ENCODE measurements at regions of chr4 and their contacts with region 1.

Region 1: GRCh38 chr4:186137196-186137794 is 32.8 kb downstream of the FAM149A start:
- DNase-seq: no peak
- ATAC-seq: peak; percentile 32
- H3K4me3 Mint-ChIP-seq: no peak overlapping the region
- H3K27ac Mint-ChIP-seq: no peak overlapping the region
- H3K4me1 Mint-ChIP-seq: peaks cover 8% of the 10 kb centered on the region
- H3K27me3 Mint-ChIP-seq: peaks cover 12% of the 10 kb centered on the region
- CTCF ChIP-seq: no peak

Region 2: DNA sequence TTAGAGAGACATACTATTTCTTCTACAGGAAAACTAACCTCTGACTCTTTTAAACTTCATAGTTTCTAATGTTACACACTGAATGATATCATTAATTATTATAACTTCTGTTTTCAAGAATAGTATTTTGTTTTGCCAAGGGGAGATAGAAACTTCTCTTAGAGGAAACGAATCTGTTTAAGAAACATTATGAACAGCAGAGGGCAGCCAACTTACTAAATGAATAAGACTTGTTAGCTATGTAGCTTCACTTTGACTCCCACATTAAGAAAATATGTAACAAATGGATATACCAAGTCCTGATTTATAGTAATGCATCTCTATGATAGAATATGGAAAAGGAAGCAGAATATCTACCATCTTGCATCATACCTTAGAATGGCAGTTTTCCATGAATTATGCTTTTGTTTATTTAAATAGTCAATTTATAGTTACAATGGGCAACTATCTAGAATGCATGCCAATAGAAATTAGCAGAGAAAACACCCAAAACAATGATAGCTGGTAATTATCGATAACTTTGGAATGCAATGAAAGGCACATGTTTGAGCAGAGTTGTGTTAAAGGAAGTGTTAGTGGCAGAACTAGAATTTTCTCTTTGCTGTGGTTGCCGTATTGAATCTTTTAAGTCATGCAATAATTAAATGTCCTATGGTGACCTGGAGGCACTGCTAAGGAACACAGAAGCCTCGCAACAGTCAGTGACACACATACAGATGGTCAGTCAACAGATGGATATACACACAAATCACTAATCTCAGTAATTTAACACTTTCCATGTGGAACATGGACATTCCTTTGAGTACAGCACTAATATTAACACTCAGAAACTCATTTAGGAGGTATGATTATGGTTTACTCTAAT is 496.3 kb before region 1 on chr4:
- CTCF ChIA-PET with region 1: interaction called, 16 read pairs
- POLR2A ChIA-PET with region 1: no interaction called
- intact Hi-C with region 1: loop called (anchors 1 kb)
- DNase-seq: no peak
- ATAC-seq: no peak
- H3K4me3 Mint-ChIP-seq: no peak overlapping the region
- H3K27ac Mint-ChIP-seq: no peak overlapping the region
- H3K4me1 Mint-ChIP-seq: no peaks in the 10 kb centered on the region
- H3K27me3 Mint-ChIP-seq: peaks cover 31% of the 10 kb centered on the region
- CTCF ChIP-seq: no peak

Region 3: DNA sequence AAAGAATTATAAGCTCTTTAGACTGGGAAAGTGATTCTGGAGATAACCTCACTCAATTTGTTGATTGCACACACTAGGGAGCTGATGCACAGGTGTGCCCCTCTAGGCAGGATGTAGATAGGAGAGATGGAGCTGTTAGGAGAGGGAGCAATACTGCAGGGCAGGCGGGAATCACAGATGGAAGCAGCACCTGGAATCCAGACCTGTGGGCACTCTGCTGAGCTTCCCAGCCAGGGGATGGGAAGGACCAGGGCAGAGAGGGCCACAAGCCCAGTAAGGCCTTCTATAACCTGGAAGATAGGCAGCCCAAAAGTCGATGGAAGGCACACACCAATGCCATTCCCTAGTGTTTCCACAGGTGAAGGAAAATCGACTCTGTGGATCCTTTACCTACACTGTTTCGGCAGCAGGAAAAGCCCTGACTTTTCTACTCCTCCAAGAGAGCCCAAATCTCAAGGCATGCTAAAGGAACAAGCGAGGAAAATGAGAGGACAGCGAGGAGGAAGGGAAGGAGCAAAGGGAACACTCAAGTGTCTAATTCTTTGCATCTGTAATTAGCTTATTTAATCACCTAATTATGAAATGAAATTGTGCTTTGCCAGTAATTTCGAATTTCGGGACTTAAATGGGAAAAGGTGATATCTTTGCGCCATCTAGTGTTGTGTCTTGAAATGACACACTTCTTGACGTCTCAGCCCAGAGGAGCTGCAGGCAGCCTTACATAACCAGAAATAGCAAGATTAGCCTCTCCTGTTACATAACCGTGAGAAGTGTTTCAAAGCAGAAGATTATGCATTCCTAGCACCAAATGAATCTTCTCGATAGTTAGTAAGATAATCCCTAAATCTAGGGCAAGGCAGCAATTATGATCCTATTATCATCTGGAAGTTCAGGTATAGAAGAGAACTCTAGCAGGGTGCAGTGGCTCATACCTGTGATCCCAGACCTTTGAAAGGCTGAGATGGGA is 99.3 kb before region 1 on chr4:
- CTCF ChIA-PET with region 1: interaction called, 3 read pairs
- POLR2A ChIA-PET with region 1: no interaction called
- intact Hi-C with region 1: loop called (anchors 1 kb)
- DNase-seq: no peak
- ATAC-seq: peak; percentile 60
- H3K4me3 Mint-ChIP-seq: no peak overlapping the region
- H3K27ac Mint-ChIP-seq: no peak overlapping the region
- H3K4me1 Mint-ChIP-seq: no peaks in the 10 kb centered on the region
- H3K27me3 Mint-ChIP-seq: peaks cover 28% of the 10 kb centered on the region
- CTCF ChIP-seq: peak; percentile 41

Region 4: GRCh38 chr4:186067757-186068385 is 69.4 kb before region 1 on chr4:
- CTCF ChIA-PET with region 1: interaction called, 16 read pairs
- POLR2A ChIA-PET with region 1: no interaction called
- intact Hi-C with region 1: loop called (anchors 1 kb)
- DNase-seq: no peak
- ATAC-seq: no peak
- H3K4me3 Mint-ChIP-seq: no peak overlapping the region
- H3K27ac Mint-ChIP-seq: no peak overlapping the region
- H3K4me1 Mint-ChIP-seq: peaks cover 7% of the 10 kb centered on the region
- H3K27me3 Mint-ChIP-seq: peaks cover 39% of the 10 kb centered on the region
- CTCF ChIP-seq: no peak

Region 5: GRCh38 chr4:186096681-186097165 is 40.6 kb before region 1 on chr4:
- CTCF ChIA-PET with region 1: no interaction called
- POLR2A ChIA-PET with region 1: no interaction called
- intact Hi-C with region 1: no loop called
- DNase-seq: no peak
- ATAC-seq: no peak
- H3K4me3 Mint-ChIP-seq: no peak overlapping the region
- H3K27ac Mint-ChIP-seq: no peak overlapping the region
- H3K4me1 Mint-ChIP-seq: no peaks in the 10 kb centered on the region
- H3K27me3 Mint-ChIP-seq: peaks cover 32% of the 10 kb centered on the region
- CTCF ChIP-seq: no peak

Region 6: GRCh38 chr4:187840814-187841213 is 1703.5 kb after region 1 on chr4:
- CTCF ChIA-PET with region 1: no interaction called
- POLR2A ChIA-PET with region 1: no interaction called
- intact Hi-C with region 1: no loop called
- DNase-seq: no peak
- ATAC-seq: no peak
- H3K4me3 Mint-ChIP-seq: no peak overlapping the region
- H3K27ac Mint-ChIP-seq: no peak overlapping the region
- H3K4me1 Mint-ChIP-seq: no peaks in the 10 kb centered on the region
- H3K27me3 Mint-ChIP-seq: no peaks in the 10 kb centered on the region
- CTCF ChIP-seq: no peak